Thyroid gland (tissue), 4 donors: ENCODE measurements at regions of chr12 and their contacts with region 1.

Region 1: DNA sequence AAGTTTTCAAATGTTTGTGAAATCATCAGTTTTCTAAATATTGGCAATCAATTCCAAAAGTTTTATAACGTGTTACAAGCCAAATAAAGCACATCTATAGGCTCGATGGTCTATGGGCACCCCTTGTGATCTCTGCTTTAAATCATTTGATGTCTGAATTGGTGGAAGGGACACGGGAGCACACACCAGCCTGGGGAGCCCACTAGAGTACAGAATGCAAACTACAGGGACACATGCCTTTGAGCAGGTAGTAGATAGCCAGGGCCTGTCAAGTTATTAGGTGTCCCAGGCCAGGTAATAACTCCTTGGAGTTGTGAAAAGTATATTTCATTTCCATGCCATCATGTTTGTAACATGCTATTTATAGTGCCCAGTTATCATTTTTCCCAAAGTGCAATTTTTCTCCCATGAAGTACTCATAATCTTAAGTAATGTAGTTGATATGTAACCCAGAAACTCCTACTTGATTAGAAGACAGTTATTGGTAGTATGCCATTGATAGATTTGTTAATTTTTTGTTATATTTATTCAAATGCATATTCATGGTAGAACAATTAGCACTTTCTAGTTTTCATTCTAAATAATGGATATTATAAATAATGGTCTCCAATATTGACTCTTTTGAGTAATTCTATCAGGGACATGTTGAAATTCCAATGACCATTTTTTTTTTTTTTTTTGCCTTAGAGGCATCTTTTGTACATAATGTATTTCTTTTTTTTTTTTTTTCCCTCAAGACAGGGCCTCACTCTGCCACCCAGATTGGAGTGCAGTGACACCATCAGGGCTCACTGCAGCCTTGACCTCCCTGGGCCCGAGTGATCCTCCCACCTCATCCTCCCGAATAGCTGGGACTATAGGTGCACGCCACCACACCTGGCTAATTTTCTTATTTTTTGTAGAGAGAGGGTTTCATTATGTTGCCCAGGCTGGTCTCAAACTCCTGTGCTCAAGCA is 96.9 kb upstream of the FGD4 start:
- DNase-seq: peak in 1 of 2 donors; percentile 11
- H3K4me3 ChIP-seq: no peak overlapping the region
- H3K27ac ChIP-seq: no peak overlapping the region
- H3K4me1 ChIP-seq: no peaks in the 10 kb centered on the region
- H3K27me3 ChIP-seq: no peaks in the 10 kb centered on the region
- CTCF ChIP-seq: peak in 3 of 6 experiments; percentile 38 to 52 (median 45)
- POLR2A ChIP-seq: no peak

Region 2: DNA sequence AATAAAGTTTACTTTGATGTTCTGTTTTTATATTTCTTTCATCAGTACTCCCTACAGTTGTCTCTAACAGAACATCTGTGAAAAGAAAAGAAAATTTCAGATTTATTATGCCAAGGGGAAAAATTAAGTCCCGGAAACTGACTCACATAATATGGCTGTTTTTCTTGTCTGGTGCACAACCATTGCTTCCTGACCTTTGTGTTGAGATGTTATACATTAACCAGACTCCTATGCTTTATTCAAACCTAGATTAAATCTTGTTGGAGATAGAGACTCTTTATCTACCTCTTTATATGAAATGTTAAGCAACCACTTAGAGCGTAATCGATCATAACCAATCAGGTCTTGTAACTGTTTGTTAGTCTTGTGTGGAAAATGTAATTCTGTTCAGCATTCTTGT is 233.4 kb before region 1 on chr12:
- intact Hi-C with region 1: loop called (anchors 10 kb)
- DNase-seq: no peak
- H3K4me3 ChIP-seq: no peak overlapping the region
- H3K27ac ChIP-seq: no peak overlapping the region
- H3K4me1 ChIP-seq: no peaks in the 10 kb centered on the region
- H3K27me3 ChIP-seq: no peaks in the 10 kb centered on the region
- CTCF ChIP-seq: no peak
- POLR2A ChIP-seq: no peak

Region 3: GRCh38 chr12:32402946-32403345 is 100.5 kb after region 1 on chr12:
- intact Hi-C with region 1: no loop called
- DNase-seq: no peak
- H3K4me3 ChIP-seq: no peak overlapping the region
- H3K27ac ChIP-seq: peak overlapping the region in 1 of 3 donors; percentile 7
- H3K4me1 ChIP-seq: peaks cover 5 to 8% of the 10 kb centered on the region in 2 donors
- H3K27me3 ChIP-seq: no peaks in the 10 kb centered on the region
- CTCF ChIP-seq: no peak
- POLR2A ChIP-seq: no peak